Activated CD8-positive, alpha-beta memory T cell treated with anti-CD3 and anti-CD28 coated beads, Interleukin-2, amount 10 ng/mL, durations not matched to agents 7 days and 5 days (primary cell): ENCODE measurements at regions of chr5 and their contacts with region 1.

Region 1: DNA sequence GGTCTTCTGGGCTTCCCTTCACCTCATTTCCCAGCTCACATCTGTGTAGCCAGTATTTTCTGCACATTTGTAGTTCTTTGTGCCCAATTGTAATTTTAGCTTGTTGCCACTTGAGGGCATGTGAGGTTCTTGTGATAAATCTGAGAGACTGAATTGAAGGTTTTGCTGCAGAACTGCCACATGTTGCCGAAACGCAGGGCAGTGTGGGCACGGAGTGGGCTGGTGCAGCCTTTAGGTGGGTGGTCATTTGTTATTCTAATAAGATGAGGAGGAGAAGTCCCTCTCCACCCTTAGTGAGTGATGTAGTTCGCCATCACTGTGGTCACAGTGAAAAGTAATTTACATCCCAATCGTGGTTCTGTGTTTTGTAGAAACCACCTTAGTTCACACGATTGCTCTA is 21.2 kb downstream of the OTULIN start:
- DNase-seq: peak; percentile 63
- ATAC-seq: peak; percentile 80
- H3K4me3 Mint-ChIP-seq: peak overlapping the region; percentile 49
- H3K27ac Mint-ChIP-seq: peak overlapping the region; percentile 82
- H3K4me1 Mint-ChIP-seq: peaks cover 22% of the 10 kb centered on the region
- H3K27me3 Mint-ChIP-seq: no peaks in the 10 kb centered on the region

Region 2: DNA sequence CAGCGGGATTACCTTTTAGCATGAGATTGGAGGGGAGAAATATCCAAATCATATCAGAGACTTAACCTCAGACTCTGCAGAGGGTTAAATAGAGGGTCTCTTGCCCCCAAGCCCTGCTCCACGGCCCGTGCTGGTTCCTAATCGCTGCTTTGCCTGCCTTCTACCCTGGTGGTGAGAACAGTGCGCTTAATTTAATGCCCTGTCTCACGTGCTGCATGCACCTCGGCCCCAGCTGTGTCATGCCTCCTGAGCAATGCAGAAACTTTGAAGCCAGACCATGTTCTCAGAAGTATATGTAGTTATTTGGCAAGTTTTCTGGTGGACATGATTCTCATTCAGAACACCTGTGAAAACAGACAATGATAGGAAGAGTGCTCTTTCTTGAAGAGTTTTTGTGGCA is 19.8 kb before region 1 on chr5:
- CTCF ChIA-PET with region 1: interaction called, 24 read pairs
- DNase-seq: peak; percentile 78
- ATAC-seq: peak; percentile 31
- H3K4me3 Mint-ChIP-seq: peak overlapping the region; percentile 96
- H3K27ac Mint-ChIP-seq: peak overlapping the region; percentile 94
- H3K4me1 Mint-ChIP-seq: peaks cover 66% of the 10 kb centered on the region
- H3K27me3 Mint-ChIP-seq: no peaks in the 10 kb centered on the region

Region 3: GRCh38 chr5:14706615-14707021 is 20.9 kb after region 1 on chr5:
- CTCF ChIA-PET with region 1: interaction called, 16 read pairs
- DNase-seq: peak; percentile 59
- ATAC-seq: peak; percentile 94
- H3K4me3 Mint-ChIP-seq: peak overlapping the region; percentile 61
- H3K27ac Mint-ChIP-seq: peak overlapping the region; percentile 96
- H3K4me1 Mint-ChIP-seq: peaks cover 73% of the 10 kb centered on the region
- H3K27me3 Mint-ChIP-seq: no peaks in the 10 kb centered on the region